A673 (cell line): ENCODE measurements at regions of chr5 and their contacts with region 1.

Region 1: GRCh38 chr5:112752335-112752734 is 14.7 kb downstream of the APC start:
- DNase-seq: no peak
- H3K4me3 ChIP-seq: no peak overlapping the region
- H3K27ac ChIP-seq: no peak overlapping the region
- H3K4me1 ChIP-seq: peaks cover 4% of the 10 kb centered on the region
- H3K27me3 ChIP-seq: no peaks in the 10 kb centered on the region
- CTCF ChIP-seq: no peak

Region 2: DNA sequence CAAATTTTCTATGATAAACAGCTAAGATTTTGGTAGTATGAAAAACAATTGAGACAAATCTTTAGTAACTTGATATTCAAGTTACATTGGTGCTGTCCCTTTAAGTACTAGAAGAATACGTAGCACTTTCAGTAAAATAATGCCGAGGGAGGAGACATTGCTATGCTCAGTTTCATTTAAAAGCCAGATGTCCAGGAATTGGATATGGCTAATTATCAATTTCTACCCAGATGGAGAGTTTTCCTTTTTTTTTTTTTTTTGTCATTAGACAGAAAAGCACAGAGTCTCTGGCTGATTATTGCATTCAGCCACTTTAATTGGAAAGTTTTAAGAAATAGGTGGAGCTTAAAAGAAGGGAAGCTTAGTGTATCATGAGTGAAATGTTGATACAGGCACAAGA is 55.0 kb before region 1 on chr5:
- CTCF ChIA-PET with region 1: no interaction called
- POLR2A ChIA-PET with region 1: no interaction called
- intact Hi-C with region 1: loop called (anchors 2 kb)
- DNase-seq: peak; percentile 65
- H3K4me3 ChIP-seq: no peak overlapping the region
- H3K27ac ChIP-seq: peak overlapping the region; percentile 26
- H3K4me1 ChIP-seq: peaks cover 24% of the 10 kb centered on the region
- H3K27me3 ChIP-seq: no peaks in the 10 kb centered on the region
- CTCF ChIP-seq: no peak

Region 3: GRCh38 chr5:113090336-113091106 is 338.2 kb after region 1 on chr5:
- CTCF ChIA-PET with region 1: no interaction called
- POLR2A ChIA-PET with region 1: no interaction called
- intact Hi-C with region 1: no loop called
- DNase-seq: no peak
- H3K4me3 ChIP-seq: no peak overlapping the region
- H3K27ac ChIP-seq: no peak overlapping the region
- H3K4me1 ChIP-seq: no peaks in the 10 kb centered on the region
- H3K27me3 ChIP-seq: no peaks in the 10 kb centered on the region
- CTCF ChIP-seq: no peak